ENCODE measurements at regions of chr1 and their contacts with region 1.

Region 1: DNA sequence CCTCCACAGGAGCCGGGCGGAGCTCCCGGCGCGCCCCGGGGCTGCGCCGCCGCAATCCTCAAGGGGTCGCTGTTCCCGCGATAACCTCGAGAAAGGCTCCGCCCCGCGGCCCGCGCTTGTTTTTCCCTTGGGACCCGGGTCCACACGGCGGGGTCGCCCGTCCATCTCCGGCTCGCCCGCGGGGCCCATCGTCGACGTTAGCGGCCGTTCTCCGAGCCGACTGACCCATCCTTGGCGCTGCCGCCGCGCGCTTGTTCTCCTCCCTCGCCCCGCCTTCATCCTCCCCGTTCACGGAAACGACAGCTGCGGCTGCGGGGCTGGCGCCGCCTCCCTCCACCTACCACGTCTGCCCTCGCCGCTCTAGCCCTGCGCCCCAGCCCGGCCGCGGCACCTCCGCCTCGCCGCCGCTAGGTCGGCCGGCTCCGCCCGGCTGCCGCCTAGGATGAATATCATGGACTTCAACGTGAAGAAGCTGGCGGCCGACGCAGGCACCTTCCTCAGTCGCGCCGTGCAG is at the start of gene SH3GLB1:
- DNase-seq: peak; percentile 95
- ATAC-seq: peak; percentile 96
- total RNA-seq, gene SH3GLB1: 132 TPM

Region 2: GRCh38 chr1:86395771-86396497 is 308.6 kb before region 1 on chr1 and contains the start of gene ODF2L:
- intact Hi-C with region 1: loop called (anchors 10 kb)
- DNase-seq: peak; percentile 96
- ATAC-seq: peak; percentile 100
- total RNA-seq, gene ODF2L: 5.1 TPM

Region 3: GRCh38 chr1:86419277-86419903 is 285.1 kb before region 1 on chr1:
- intact Hi-C with region 1: no loop called
- DNase-seq: no peak
- ATAC-seq: peak; percentile 26

Region 4: GRCh38 chr1:86741947-86742572 is 37.5 kb after region 1 on chr1:
- intact Hi-C with region 1: loop called (anchors 1 kb)
- DNase-seq: no peak
- ATAC-seq: no peak

Region 5: GRCh38 chr1:86875722-86876121 is 171.2 kb after region 1 on chr1:
- intact Hi-C with region 1: no loop called
- DNase-seq: no peak
- ATAC-seq: no peak